ENCODE measurements at regions of chr6 and their contacts with region 1.

Region 1: GRCh38 chr6:17987576-17988421 is at the start of gene KIF13A:
- DNase-seq: peak; percentile 72
- ATAC-seq: peak; percentile 76
- H3K4me3 Mint-ChIP-seq: peak within 1 kb of the TSS; percentile 91
- H3K27ac Mint-ChIP-seq: peak within 1 kb of the TSS; percentile 88
- H3K4me1 Mint-ChIP-seq: peaks cover 32% of the 10 kb centered on the region
- H3K27me3 Mint-ChIP-seq: no peaks in the 10 kb centered on the region
- CTCF ChIP-seq: no peak
- total RNA-seq, gene KIF13A: 13.1 and 14.1 TPM in 2 replicates

Region 2: GRCh38 chr6:17599885-17600526 is 387.8 kb before region 1 on chr6 and contains the start of gene FAM8A1:
- CTCF ChIA-PET with region 1: no interaction called
- POLR2A ChIA-PET with region 1: no interaction called
- intact Hi-C with region 1: loop called (anchors 2 kb)
- DNase-seq: peak; percentile 88
- ATAC-seq: peak; percentile 91
- H3K4me3 Mint-ChIP-seq: peak within 1 kb of the TSS; percentile 80
- H3K27ac Mint-ChIP-seq: peak within 1 kb of the TSS; percentile 78
- H3K4me1 Mint-ChIP-seq: peaks cover 11% of the 10 kb centered on the region
- H3K27me3 Mint-ChIP-seq: no peaks in the 10 kb centered on the region
- CTCF ChIP-seq: no peak
- total RNA-seq, gene FAM8A1: 2.6 and 3.0 TPM in 2 replicates

Region 3: GRCh38 chr6:17884498-17885478 is 103.0 kb before region 1 on chr6:
- CTCF ChIA-PET with region 1: no interaction called
- POLR2A ChIA-PET with region 1: interaction called, 3 read pairs
- intact Hi-C with region 1: loop called (anchors 2 kb)
- DNase-seq: no peak
- ATAC-seq: peak; percentile 67
- H3K4me3 Mint-ChIP-seq: peak overlapping the region; percentile 78
- H3K27ac Mint-ChIP-seq: peak overlapping the region; percentile 83
- H3K4me1 Mint-ChIP-seq: peaks cover 40% of the 10 kb centered on the region
- H3K27me3 Mint-ChIP-seq: no peaks in the 10 kb centered on the region
- CTCF ChIP-seq: no peak

Region 4: GRCh38 chr6:18323935-18324705 is 336.3 kb after region 1 on chr6:
- CTCF ChIA-PET with region 1: no interaction called
- POLR2A ChIA-PET with region 1: no interaction called
- intact Hi-C with region 1: loop called (anchors 5 kb)
- DNase-seq: no peak
- ATAC-seq: peak; percentile 62
- H3K4me3 Mint-ChIP-seq: no peak overlapping the region
- H3K27ac Mint-ChIP-seq: no peak overlapping the region
- H3K4me1 Mint-ChIP-seq: peaks cover 34% of the 10 kb centered on the region
- H3K27me3 Mint-ChIP-seq: no peaks in the 10 kb centered on the region
- CTCF ChIP-seq: peak; percentile 44

Region 5: DNA sequence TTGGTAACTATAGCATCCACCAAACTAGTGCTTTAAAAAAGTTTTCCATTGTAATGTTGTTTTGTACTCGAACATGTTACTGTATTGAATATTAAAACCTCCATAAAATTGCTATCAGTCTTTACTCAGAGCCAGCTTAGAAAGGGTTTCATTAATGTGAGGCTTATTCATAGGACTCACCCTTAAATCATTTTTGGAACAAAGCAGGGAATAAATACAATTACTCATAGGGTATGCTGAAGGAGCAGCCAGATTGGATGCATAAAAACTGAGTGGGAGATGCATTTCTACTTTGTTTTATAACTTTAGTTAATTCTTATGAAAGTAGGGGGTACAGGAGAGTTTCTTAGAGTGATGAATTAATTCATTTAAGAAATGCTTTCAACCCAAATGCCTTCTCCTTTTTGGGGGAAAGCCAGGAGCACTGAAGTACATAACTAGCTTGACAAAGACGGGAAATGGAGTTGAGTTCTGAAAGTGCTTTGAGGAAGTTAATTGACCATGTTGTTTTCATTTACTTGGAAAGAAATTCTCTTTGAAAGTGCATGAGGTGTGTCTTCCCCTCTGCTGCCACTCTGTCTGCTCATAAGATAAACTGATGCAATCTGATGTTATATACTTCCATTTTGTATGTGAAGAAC is 489.6 kb after region 1 on chr6:
- CTCF ChIA-PET with region 1: no interaction called
- POLR2A ChIA-PET with region 1: no interaction called
- intact Hi-C with region 1: loop called (anchors 10 kb)
- DNase-seq: no peak
- ATAC-seq: peak; percentile 80
- H3K4me3 Mint-ChIP-seq: peak overlapping the region; percentile 55
- H3K27ac Mint-ChIP-seq: peak overlapping the region; percentile 82
- H3K4me1 Mint-ChIP-seq: peaks cover 46% of the 10 kb centered on the region
- H3K27me3 Mint-ChIP-seq: no peaks in the 10 kb centered on the region
- CTCF ChIP-seq: no peak